ENCODE measurements at regions of chr4 and their contacts with region 1.

Region 1: DNA sequence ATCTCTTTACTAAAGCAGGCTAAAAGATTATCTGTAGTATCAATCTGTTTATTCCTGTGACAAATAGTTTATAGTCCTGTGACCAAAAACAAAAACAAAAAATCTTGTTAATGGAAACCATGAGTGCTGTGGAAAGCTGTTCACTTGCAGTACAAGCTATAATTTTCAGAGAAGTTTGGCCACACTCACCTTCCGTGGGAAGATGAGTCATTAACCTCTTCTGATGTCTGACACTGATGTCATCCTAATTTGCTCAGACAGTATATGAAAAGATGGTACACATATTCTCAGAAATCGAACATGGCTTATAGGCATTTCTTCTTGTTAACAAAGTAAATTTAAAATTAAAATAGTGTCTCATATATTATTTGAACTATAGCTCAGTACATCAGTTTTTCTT is 19.9 kb upstream of the ENPP6 start:
- DNase-seq: peak; percentile 73
- ATAC-seq: peak; percentile 97
- H3K4me3 Mint-ChIP-seq: peak overlapping the region; percentile 9
- H3K27ac Mint-ChIP-seq: peak overlapping the region; percentile 84
- H3K4me1 Mint-ChIP-seq: peaks cover 28% of the 10 kb centered on the region
- H3K27me3 Mint-ChIP-seq: no peaks in the 10 kb centered on the region

Region 2: DNA sequence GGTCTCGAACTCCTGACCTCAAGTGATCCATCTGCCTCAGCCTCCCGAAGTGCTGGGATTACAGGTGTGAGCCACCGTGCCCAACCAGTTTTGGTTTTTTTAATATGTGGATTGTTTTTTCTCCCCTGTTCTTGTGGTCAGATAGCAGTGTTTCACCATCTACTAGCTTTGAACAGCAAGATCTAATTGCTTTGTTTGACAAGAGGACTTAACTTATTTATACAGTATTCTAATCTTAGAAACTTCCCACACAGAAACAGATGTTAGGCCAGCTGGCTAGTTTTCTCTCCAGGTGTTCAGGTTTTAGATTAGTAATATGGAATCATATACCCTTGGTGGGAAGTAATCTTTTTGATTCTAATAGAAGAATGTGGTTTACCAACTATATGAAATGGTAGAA is 719.8 kb before region 1 on chr4:
- CTCF ChIA-PET with region 1: no interaction called
- POLR2A ChIA-PET with region 1: no interaction called
- intact Hi-C with region 1: no loop called
- DNase-seq: no peak
- ATAC-seq: no peak
- H3K4me3 Mint-ChIP-seq: no peak overlapping the region
- H3K27ac Mint-ChIP-seq: no peak overlapping the region
- H3K4me1 Mint-ChIP-seq: no peaks in the 10 kb centered on the region
- H3K27me3 Mint-ChIP-seq: no peaks in the 10 kb centered on the region

Region 3: GRCh38 chr4:184408021-184408710 is 170.6 kb after region 1 on chr4:
- CTCF ChIA-PET with region 1: no interaction called
- POLR2A ChIA-PET with region 1: no interaction called
- intact Hi-C with region 1: no loop called
- DNase-seq: no peak
- ATAC-seq: peak; percentile 75
- H3K4me3 Mint-ChIP-seq: no peak overlapping the region
- H3K27ac Mint-ChIP-seq: peak overlapping the region; percentile 69
- H3K4me1 Mint-ChIP-seq: peaks cover 51% of the 10 kb centered on the region
- H3K27me3 Mint-ChIP-seq: no peaks in the 10 kb centered on the region

Region 4: GRCh38 chr4:184968784-184969201 is 731.2 kb after region 1 on chr4:
- CTCF ChIA-PET with region 1: no interaction called
- POLR2A ChIA-PET with region 1: no interaction called
- intact Hi-C with region 1: loop called in 1 of 2 experiments (anchors 10 kb)
- DNase-seq: peak; percentile 20
- ATAC-seq: no peak
- H3K4me3 Mint-ChIP-seq: no peak overlapping the region
- H3K27ac Mint-ChIP-seq: no peak overlapping the region
- H3K4me1 Mint-ChIP-seq: peaks cover 6% of the 10 kb centered on the region
- H3K27me3 Mint-ChIP-seq: peaks cover 4% of the 10 kb centered on the region